Activated B cell treated with CpG ODN at 0.5 μM for 24 hours (primary cell): ENCODE measurements at regions of chr4 and their contacts with region 1.

Region 1: DNA sequence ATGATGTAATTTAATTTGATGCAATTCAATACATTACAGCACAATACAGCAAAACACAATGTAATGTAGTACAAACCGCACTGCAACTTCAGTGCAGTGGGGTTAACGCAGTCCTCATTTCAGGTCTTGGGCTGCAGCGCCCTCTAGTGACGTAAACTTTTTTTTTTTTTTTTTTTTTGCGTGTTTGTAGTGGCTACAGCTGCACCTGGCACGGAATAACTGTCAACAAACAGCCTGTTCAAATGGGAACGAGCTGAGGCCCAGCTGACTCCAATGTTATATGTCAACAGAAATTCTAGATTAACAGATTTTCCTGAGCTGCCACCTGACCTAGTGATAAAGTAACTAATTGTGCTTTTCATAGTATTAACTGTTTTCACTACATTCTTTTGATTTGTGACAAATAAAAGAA is 33.5 kb upstream of the RASSF6 start:
- DNase-seq: no peak
- ATAC-seq: peak; percentile 47
- H3K4me3 Mint-ChIP-seq: no peak overlapping the region
- H3K27ac Mint-ChIP-seq: no peak overlapping the region
- H3K4me1 Mint-ChIP-seq: no peaks in the 10 kb centered on the region
- H3K27me3 Mint-ChIP-seq: no peaks in the 10 kb centered on the region
- CTCF ChIP-seq: peak; percentile 52

Region 2: DNA sequence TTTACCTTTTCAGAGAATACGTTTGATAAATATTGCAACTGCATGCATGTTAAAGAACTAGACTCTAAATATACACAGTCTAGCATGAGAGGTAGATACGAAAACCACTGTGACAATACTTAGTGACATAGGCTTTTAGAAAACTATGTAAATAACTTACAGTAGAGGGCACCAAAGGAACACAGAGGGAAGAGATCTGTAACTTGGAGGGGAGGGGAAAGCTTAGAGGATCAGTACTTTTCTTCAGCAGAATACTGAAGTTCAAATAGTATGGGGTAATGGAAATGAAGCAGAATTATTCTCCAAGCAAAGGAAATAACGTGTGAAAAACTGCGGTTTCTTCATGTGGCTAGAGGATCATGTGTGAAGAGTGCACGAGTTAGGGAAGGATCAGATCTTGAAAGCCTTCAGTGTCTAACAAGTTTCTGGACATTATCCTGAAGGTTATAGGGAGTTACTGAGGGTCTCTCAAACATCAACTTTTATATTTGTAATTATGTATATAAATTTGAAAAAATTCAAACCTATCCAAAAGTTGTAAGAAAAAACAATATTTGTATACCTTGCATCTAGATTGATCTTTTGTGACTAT is 1357.6 kb before region 1 on chr4:
- CTCF ChIA-PET with region 1: no interaction called
- POLR2A ChIA-PET with region 1: no interaction called
- intact Hi-C with region 1: loop called (anchors 5 kb)
- DNase-seq: no peak
- ATAC-seq: no peak
- H3K4me3 Mint-ChIP-seq: no peak overlapping the region
- H3K27ac Mint-ChIP-seq: no peak overlapping the region
- H3K4me1 Mint-ChIP-seq: no peaks in the 10 kb centered on the region
- H3K27me3 Mint-ChIP-seq: peaks cover 1% of the 10 kb centered on the region
- CTCF ChIP-seq: no peak

Region 3: DNA sequence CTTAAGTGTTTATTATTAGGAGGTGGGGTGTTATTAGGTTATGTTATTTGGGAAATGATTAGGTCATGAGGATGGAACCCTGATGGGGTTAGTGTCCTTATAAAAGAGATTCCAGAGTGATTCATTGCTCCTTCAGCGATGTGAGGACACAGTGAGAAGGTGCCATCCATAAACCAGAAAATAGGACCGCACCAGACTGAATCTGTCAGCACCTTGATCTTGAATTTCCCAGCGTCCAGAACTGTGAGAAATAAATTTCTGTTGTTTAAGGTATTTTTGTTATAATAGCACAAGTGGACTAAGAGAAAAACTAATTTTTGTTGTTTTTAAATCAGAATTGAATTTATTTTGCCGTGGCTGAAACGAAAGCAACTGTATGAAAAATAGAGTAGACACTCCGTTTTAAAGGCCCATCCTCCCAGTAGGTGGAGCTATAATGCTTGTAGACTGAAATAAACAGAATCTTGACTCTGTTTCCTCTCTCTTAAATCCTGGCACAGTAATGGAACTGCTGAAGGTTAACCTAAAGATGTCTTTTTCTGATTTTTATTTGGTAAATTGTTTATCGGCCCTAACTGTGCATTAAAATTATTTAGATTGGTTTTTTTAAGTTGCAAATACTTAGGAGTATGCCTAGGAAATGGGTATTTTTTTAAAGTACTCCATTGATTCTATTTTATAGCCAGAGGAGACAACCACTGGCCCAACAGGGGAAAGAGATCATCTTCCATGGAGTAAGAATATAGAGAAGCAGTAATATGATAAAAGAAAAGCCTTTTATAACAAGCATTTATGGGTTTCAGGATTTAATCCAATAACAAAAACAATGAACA is 951.5 kb before region 1 on chr4:
- CTCF ChIA-PET with region 1: interaction called, 3 read pairs
- POLR2A ChIA-PET with region 1: no interaction called
- intact Hi-C with region 1: loop called (anchors 2 kb)
- DNase-seq: no peak
- ATAC-seq: no peak
- H3K4me3 Mint-ChIP-seq: peak overlapping the region; percentile 75
- H3K27ac Mint-ChIP-seq: no peak overlapping the region
- H3K4me1 Mint-ChIP-seq: no peaks in the 10 kb centered on the region
- H3K27me3 Mint-ChIP-seq: peaks cover 6% of the 10 kb centered on the region
- CTCF ChIP-seq: no peak

Region 4: DNA sequence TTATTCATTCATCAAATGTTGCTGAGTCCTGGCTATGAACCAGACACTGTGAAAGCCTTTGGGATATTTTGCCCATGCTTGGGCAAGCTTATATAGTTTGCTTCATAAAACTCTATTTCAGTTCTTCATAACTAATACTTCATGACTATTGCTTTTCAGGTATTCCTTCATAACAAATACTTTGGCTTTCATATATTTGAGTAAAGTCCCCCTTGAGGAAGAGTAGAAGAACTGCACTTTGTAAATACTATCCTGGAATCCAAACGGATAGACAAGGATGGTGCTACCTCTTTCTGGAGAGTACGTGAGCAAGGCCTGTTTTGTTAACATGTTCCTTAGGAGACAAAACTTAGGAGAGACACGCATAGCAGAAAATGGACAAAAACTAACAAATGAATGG is 219.4 kb before region 1 on chr4:
- CTCF ChIA-PET with region 1: no interaction called
- POLR2A ChIA-PET with region 1: no interaction called
- intact Hi-C with region 1: loop called (anchors 5 kb)
- DNase-seq: no peak
- ATAC-seq: no peak
- H3K4me3 Mint-ChIP-seq: no peak overlapping the region
- H3K27ac Mint-ChIP-seq: no peak overlapping the region
- H3K4me1 Mint-ChIP-seq: no peaks in the 10 kb centered on the region
- H3K27me3 Mint-ChIP-seq: peaks cover 8% of the 10 kb centered on the region
- CTCF ChIP-seq: no peak

Region 5: DNA sequence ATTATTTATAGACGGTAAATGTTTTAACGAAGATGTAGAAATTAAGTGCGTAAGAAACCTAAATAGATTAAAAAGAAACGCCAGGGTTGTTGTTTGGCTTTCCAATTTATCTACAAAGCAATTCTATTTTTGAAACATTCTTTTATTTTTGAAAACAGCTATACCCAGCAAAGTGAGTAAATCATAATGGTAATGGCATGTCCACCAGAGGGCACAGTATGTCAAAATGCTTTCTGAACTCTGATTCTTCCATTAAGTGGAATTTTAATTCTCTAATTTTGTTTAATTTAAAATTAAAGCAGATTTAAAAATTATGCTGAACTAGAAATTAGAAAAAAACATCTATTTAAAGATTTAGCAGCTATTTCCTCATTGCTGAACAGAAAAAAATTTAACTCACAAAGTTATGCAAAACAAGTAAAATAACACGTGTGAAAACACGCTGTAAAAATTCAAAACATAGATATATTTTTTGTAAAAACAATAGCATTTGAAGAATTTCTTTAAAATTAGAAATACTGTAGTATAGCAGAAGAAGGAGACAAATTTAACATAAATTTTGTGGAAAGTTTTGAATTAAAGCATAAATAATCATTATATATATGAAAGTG is 60.0 kb before region 1 on chr4:
- CTCF ChIA-PET with region 1: interaction called, 42 read pairs
- POLR2A ChIA-PET with region 1: no interaction called
- intact Hi-C with region 1: loop called (anchors 1 kb)
- DNase-seq: no peak
- ATAC-seq: no peak
- H3K4me3 Mint-ChIP-seq: no peak overlapping the region
- H3K27ac Mint-ChIP-seq: no peak overlapping the region
- H3K4me1 Mint-ChIP-seq: peaks cover 34% of the 10 kb centered on the region
- H3K27me3 Mint-ChIP-seq: no peaks in the 10 kb centered on the region
- CTCF ChIP-seq: no peak

Region 6: DNA sequence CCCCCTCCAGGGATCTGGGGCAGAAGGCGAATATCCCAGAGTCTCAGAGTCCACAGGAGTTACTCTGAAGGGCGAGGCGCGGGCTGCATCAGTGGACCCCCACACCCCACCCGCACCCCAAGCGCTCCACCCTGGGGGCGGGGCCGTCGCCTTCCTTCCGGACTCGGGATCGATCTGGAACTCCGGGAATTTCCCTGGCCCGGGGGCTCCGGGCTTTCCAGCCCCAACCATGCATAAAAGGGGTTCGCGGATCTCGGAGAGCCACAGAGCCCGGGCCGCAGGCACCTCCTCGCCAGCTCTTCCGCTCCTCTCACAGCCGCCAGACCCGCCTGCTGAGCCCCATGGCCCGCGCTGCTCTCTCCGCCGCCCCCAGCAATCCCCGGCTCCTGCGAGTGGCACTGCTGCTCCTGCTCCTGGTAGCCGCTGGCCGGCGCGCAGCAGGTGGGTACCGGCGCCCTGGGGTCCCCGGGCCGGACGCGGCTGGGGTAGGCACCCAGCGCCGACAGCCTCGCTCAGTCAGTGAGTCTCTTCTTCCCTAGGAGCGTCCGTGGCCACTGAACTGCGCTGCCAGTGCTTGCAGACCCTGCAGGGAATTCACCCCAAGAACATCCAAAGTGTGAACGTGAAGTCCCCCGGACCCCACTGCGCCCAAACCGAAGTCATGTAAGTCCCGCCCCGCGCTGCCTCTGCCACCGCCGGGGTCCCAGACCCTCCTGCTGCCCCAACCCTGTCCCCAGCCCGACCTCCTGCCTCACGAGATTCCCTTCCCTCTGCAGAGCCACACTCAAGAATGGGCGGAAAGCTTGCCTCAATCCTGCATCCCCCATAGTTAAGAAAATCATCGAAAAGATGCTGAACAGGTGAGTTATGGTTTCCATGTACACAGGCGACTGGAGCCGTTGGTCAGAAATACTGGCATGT is 215.7 kb after region 1 on chr4 and contains the start of gene CXCL1:
- CTCF ChIA-PET with region 1: no interaction called
- POLR2A ChIA-PET with region 1: no interaction called
- intact Hi-C with region 1: no loop called
- DNase-seq: no peak
- ATAC-seq: no peak
- H3K4me3 Mint-ChIP-seq: no peak within 1 kb of the TSS
- H3K27ac Mint-ChIP-seq: no peak within 1 kb of the TSS
- H3K4me1 Mint-ChIP-seq: peaks cover 5% of the 10 kb centered on the region
- H3K27me3 Mint-ChIP-seq: peaks cover 23% of the 10 kb centered on the region
- CTCF ChIP-seq: no peak
- total RNA-seq, gene CXCL1: not detected in 2 replicates